ENCODE measurements at regions of chr9 and their contacts with region 1.

Region 1: GRCh38 chr9:26768145-26768544 is 124.5 kb downstream of the CAAP1 start:
- DNase-seq: no peak
- ATAC-seq: no peak
- H3K4me3 ChIP-seq: no peak overlapping the region
- H3K27ac ChIP-seq: no peak overlapping the region
- H3K4me1 ChIP-seq: no peaks in the 10 kb centered on the region
- H3K27me3 ChIP-seq: peaks cover 0 to 4% (median 0%) of the 10 kb centered on the region in 7 donors
- CTCF ChIP-seq: no peak

Region 2: GRCh38 chr9:26706223-26706622 is 61.9 kb before region 1 on chr9:
- intact Hi-C with region 1: loop called in 1 of 10 experiments (anchors 10 kb)
- DNase-seq: no peak
- ATAC-seq: no peak
- H3K4me3 ChIP-seq: no peak overlapping the region
- H3K27ac ChIP-seq: no peak overlapping the region
- H3K4me1 ChIP-seq: no peaks in the 10 kb centered on the region
- H3K27me3 ChIP-seq: no peaks in the 10 kb centered on the region
- CTCF ChIP-seq: no peak

Region 3: DNA sequence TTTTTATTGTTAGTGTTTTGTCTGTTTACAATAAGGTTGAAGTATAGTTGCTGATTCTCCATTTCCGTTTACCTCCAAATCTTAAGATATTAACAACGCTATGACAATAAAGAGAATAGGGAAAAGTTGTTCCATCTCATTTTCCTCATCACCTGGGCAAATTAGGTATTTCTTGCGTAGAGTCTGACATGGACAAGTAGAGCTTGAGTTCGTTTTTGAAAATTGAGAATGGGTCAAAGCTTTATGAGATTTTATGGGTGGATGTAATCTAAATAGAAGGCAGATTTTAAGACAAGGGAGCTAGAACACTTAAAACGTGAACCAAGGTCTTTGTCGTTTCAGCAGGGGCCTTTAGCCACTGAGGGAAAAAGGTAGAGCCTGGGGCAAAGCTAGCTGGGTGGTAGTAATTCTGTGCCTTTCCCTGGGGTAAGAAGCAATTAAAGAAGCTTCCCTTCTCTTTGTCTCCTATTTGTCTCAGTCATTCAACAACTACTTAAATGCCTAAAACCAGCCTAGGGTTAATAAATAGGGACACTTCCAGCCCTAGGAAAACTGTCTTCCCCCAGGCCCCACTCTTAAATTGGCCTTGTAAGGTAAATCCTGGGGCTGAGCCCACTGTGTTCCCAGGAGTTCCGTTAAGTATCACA is 125.0 kb after region 1 on chr9:
- intact Hi-C with region 1: no loop called
- DNase-seq: no peak
- ATAC-seq: no peak
- H3K4me3 ChIP-seq: peak overlapping the region in 9 of 10 donors; percentile 80 to 99 (median 95)
- H3K27ac ChIP-seq: peak overlapping the region in 9 of 10 donors; percentile 93 to 100 (median 96)
- H3K4me1 ChIP-seq: peaks cover 0 to 35% (median 22%) of the 10 kb centered on the region in 9 donors
- H3K27me3 ChIP-seq: no peaks in the 10 kb centered on the region
- CTCF ChIP-seq: no peak